Endothelial cell of umbilical vein (primary cell): ENCODE measurements at regions of chr15 and their contacts with region 1.

Region 1: GRCh38 chr15:89129123-89129815 is 41.0 kb downstream of the ABHD2 start:
- DNase-seq: peak; percentile 62
- H3K4me3 ChIP-seq: no peak overlapping the region
- H3K27ac ChIP-seq: peak overlapping the region; percentile 52
- H3K4me1 ChIP-seq: peaks cover 41% of the 10 kb centered on the region
- H3K27me3 ChIP-seq: no peaks in the 10 kb centered on the region
- CTCF ChIP-seq: peak; percentile 67 to 78
- POLR2A ChIP-seq: no peak

Region 2: DNA sequence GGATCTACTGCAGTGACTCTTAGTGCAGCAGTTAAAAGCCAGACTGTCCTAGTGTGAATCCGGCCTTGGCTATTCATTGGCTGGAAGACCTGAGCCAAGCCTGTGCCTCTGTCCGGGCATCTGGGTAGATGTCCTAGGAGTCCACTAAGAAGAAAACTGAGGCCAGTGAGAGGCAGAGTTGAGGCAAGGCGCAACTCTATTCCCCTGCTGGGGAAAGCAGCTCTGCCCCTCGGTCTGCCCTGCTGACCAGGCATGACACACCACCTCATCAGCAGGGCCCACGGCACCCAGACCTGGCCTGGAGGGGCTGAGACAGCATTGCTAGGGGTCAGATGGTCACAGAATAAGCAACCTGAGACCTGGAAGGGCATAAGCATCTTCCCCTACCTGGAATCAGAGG is 87.8 kb before region 1 on chr15:
- CTCF ChIA-PET with region 1: no interaction called
- POLR2A ChIA-PET with region 1: no interaction called
- dilution Hi-C with region 1: no loop called
- intact Hi-C with region 1: no loop called
- DNase-seq: no peak
- H3K4me3 ChIP-seq: no peak overlapping the region
- H3K27ac ChIP-seq: no peak overlapping the region
- H3K4me1 ChIP-seq: no peaks in the 10 kb centered on the region
- H3K27me3 ChIP-seq: no peaks in the 10 kb centered on the region
- CTCF ChIP-seq: no peak
- POLR2A ChIP-seq: no peak

Region 3: DNA sequence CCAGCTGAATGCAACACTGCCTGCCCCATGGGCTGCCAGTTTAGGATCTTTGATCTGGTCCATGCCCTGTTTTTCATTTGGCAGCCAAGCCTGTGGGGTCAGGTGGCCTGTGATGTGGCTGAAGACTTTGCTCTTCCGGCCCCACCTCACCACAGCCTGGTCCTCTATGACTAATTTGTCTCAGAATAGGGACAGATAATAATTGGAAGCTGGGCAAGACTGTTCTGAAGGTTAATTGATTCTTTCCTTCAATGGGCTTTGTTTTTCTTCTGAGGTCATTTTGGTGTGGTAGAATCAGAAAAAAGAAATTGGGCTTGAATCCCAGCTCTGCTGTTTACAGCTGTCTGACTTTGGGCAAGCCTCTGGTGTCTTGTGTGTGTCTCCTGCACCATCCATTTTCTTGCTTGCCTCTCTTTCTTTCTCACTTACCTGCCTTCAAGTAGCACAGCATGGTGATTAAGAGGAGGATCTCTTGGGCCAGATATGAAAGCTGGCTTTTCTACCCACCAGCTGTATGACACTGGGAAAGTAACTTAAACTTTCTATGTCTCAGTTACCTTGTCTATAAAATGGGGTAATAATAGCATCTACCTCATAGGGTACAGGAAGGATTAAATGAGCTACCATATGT is 16.8 kb before region 1 on chr15:
- CTCF ChIA-PET with region 1: interaction called, 20 read pairs
- POLR2A ChIA-PET with region 1: no interaction called
- dilution Hi-C with region 1: no loop called
- intact Hi-C with region 1: no loop called
- DNase-seq: peak; percentile 73
- H3K4me3 ChIP-seq: no peak overlapping the region
- H3K27ac ChIP-seq: peak overlapping the region; percentile 62
- H3K4me1 ChIP-seq: peaks cover 16% of the 10 kb centered on the region
- H3K27me3 ChIP-seq: no peaks in the 10 kb centered on the region
- CTCF ChIP-seq: no peak
- POLR2A ChIP-seq: no peak

Region 4: DNA sequence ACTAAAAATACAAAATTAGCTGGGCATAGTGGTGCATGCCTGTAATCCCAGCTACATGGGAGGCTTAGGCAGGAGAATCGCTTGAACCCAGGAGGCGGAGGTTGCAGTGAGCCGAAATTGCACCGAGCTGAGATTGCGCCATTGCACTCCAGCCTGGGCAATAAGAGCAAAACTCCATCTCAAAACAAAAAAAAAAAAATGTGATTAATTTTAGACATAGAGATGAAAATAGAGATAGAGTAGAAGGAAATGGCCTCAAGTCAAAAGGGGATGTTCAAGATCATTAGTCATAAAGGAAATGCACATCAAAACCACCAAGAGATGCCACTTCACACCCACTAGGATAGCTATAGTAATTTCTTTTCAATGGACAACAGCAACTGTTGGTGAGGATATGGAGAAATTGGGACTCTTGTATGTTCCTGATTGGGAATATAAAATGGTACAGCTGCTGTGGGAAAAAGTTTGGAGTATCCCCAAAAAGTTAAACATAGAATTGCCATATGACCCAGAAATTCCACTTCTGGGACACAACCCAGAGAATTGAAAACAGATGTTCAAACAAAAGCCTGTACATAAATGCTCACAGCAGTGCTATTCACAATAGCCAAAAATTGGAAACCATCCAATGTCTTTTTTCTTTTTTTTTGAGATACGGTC is 14.4 kb after region 1 on chr15:
- CTCF ChIA-PET with region 1: interaction called, 8 read pairs
- POLR2A ChIA-PET with region 1: interaction called, 5 read pairs
- dilution Hi-C with region 1: no loop called
- intact Hi-C with region 1: loop called (anchors 1 kb)
- DNase-seq: peak; percentile 88
- H3K4me3 ChIP-seq: no peak overlapping the region
- H3K27ac ChIP-seq: peak overlapping the region; percentile 68
- H3K4me1 ChIP-seq: peaks cover 26% of the 10 kb centered on the region
- H3K27me3 ChIP-seq: no peaks in the 10 kb centered on the region
- CTCF ChIP-seq: no peak
- POLR2A ChIP-seq: no peak

Region 5: GRCh38 chr15:91032919-91033803 is 1903.9 kb after region 1 on chr15:
- CTCF ChIA-PET with region 1: no interaction called
- POLR2A ChIA-PET with region 1: no interaction called
- dilution Hi-C with region 1: no loop called
- intact Hi-C with region 1: no loop called
- DNase-seq: peak; percentile 29
- H3K4me3 ChIP-seq: no peak overlapping the region
- H3K27ac ChIP-seq: no peak overlapping the region
- H3K4me1 ChIP-seq: no peaks in the 10 kb centered on the region
- H3K27me3 ChIP-seq: peaks cover 0 to 4% of the 10 kb centered on the region in 2 experiments
- CTCF ChIP-seq: peak; percentile 42 to 76
- POLR2A ChIP-seq: no peak